Endothelial cell of umbilical vein (primary cell): ENCODE measurements at regions of chr17 and their contacts with region 1.

Region 1: DNA sequence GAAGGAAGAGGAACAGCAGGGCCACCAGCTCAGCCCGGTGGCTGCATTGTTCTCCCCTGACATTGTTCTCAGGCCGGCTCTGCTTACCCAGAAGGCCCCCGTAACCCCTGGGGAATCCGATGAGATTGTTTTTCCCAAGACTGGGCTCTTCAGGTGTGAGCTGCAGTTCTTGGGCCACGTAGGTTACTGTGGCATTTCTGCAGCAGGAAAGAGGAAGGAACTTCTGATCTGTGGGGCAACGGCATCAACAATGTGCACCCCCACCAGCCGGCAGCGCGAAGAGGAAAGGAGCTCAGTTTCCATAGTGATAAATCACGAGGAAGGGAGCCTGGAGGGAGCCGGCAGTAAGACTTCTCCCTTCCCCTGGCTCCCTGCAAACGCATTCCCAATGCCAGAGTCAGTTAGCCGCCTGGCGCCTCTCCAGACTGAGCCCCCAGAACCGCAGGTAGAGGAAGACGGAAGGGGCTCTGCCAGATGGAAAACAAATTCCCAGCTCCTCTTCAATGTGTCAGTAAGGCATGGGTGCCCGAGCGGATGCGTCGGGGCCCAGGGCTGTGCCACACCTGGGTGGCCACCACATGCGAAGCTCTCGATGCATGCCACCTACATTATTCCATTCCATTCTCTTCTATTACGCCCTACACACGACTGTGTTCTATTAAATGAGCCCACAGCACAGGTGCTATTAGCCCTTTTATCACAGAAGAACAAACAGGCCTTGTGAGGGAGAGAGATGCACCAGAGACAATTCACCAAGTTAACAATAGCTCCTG is 21.5 kb upstream of the PECAM1 start:
- DNase-seq: peak; percentile 99
- H3K4me3 ChIP-seq: no peak overlapping the region
- H3K27ac ChIP-seq: peak overlapping the region; percentile 86
- H3K4me1 ChIP-seq: peaks cover 45% of the 10 kb centered on the region
- H3K27me3 ChIP-seq: no peaks in the 10 kb centered on the region
- CTCF ChIP-seq: no peak
- POLR2A ChIP-seq: peak; percentile 52

Region 2: GRCh38 chr17:64020056-64020766 is 392.0 kb before region 1 on chr17 and contains the start of gene ICAM2:
- CTCF ChIA-PET with region 1: no interaction called
- POLR2A ChIA-PET with region 1: no interaction called
- dilution Hi-C with region 1: no loop called
- intact Hi-C with region 1: loop called (anchors 5 kb)
- DNase-seq: peak; percentile 71
- H3K4me3 ChIP-seq: peak within 1 kb of the TSS; percentile 49 to 63 (median 54)
- H3K27ac ChIP-seq: peak within 1 kb of the TSS; percentile 94
- H3K4me1 ChIP-seq: peaks cover 67% of the 10 kb centered on the region
- H3K27me3 ChIP-seq: no peaks in the 10 kb centered on the region
- CTCF ChIP-seq: no peak
- POLR2A ChIP-seq: peak; percentile 48
- total RNA-seq, gene ICAM2: 514 and 586 TPM in 2 replicates

Region 3: GRCh38 chr17:64326395-64327054 is 85.7 kb before region 1 on chr17:
- CTCF ChIA-PET with region 1: interaction called, 10 read pairs
- POLR2A ChIA-PET with region 1: interaction called, 4 read pairs
- dilution Hi-C with region 1: no loop called
- intact Hi-C with region 1: loop called (anchors 1 kb)
- DNase-seq: peak; percentile 77
- H3K4me3 ChIP-seq: no peak overlapping the region
- H3K27ac ChIP-seq: peak overlapping the region; percentile 95
- H3K4me1 ChIP-seq: peaks cover 57% of the 10 kb centered on the region
- H3K27me3 ChIP-seq: no peaks in the 10 kb centered on the region
- CTCF ChIP-seq: no peak
- POLR2A ChIP-seq: peak; percentile 45

Region 4: DNA sequence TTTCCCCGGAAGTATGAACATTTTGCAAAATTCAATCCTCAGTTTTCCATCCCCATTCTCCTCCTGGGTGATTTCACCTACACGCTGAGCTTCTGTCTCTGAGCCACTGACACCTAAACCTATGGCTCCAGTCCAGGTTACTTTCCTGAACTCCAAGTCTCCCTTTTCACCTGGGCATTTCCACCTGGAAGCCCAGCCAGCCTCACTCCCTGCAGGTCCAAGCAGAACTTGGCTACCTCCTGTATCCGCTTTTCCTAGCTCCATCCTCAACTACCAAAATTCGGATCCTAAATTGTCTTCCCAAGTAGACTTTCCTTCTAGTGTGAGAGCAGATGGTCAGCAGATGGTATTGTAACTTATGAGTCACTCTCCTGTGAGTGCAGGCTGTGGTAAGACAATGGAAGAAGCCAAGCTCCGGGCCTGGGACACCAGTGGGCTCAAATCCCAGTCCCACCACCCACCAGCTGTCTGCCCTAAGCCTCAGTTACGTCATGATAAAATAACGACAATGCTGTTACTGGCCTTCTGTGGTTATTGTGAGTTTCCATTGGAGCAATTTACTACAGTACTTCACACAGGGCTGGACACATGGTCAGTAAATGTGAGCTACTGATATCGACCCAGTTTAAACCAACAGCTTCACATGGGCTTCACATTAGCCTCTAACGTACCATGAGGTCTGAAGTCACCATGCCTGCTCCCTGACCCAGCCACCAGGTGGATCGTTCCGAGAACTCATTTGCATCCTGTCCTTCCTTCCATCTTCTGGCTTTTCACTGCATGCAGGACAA is 54.8 kb before region 1 on chr17:
- CTCF ChIA-PET with region 1: interaction called, 7 read pairs
- POLR2A ChIA-PET with region 1: no interaction called
- dilution Hi-C with region 1: no loop called
- intact Hi-C with region 1: loop called (anchors 2 kb)
- DNase-seq: peak; percentile 91
- H3K4me3 ChIP-seq: no peak overlapping the region
- H3K27ac ChIP-seq: peak overlapping the region; percentile 38
- H3K4me1 ChIP-seq: peaks cover 60% of the 10 kb centered on the region
- H3K27me3 ChIP-seq: no peaks in the 10 kb centered on the region
- CTCF ChIP-seq: no peak
- POLR2A ChIP-seq: peak; percentile 45

Region 5: GRCh38 chr17:64385187-64386083 is 26.8 kb before region 1 on chr17:
- CTCF ChIA-PET with region 1: interaction called, 60 read pairs
- POLR2A ChIA-PET with region 1: interaction called, 17 read pairs
- dilution Hi-C with region 1: no loop called
- intact Hi-C with region 1: loop called (anchors 1 kb)
- DNase-seq: peak; percentile 96
- H3K4me3 ChIP-seq: peak overlapping the region in 2 of 3 experiments; percentile 10 to 27
- H3K27ac ChIP-seq: peak overlapping the region; percentile 98
- H3K4me1 ChIP-seq: peaks cover 73% of the 10 kb centered on the region
- H3K27me3 ChIP-seq: no peaks in the 10 kb centered on the region
- CTCF ChIP-seq: no peak
- POLR2A ChIP-seq: peak; percentile 41

Region 6: DNA sequence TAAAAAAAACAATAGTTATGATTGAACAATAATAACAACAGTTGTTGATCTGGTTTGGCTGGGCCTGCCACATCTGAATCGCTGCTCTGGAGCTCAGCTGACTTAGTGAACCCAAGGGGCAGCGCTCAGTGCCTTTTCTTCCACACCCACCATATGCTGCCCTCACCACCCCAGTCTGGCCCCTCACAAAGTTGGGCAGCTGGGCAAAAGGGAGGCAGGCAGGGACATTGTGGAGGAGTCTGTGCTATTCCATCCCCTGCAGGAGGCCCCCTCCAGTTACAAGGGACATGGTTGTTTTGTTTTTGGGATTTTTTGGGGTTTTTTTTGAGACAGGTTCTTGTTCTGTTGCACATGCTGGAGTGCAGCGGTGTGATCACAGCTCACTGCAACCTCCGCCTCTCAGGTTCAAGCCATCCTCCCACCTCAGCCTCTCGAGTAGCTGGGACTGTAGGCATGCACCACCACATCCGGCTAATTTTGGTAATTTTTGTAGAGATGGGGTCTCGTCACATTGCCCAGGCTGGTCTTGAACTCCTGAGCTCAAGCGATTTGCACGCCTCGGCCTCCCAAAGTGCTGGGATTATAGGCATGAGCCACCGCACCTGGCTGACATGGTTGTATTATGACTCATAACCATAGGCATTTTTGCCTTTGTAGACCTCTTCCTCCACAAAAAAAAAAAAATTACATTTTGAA is 13.0 kb before region 1 on chr17:
- CTCF ChIA-PET with region 1: interaction called, 5 read pairs
- POLR2A ChIA-PET with region 1: no interaction called
- dilution Hi-C with region 1: no loop called
- intact Hi-C with region 1: loop called (anchors 1 kb)
- DNase-seq: peak; percentile 43
- H3K4me3 ChIP-seq: no peak overlapping the region
- H3K27ac ChIP-seq: peak overlapping the region; percentile 81
- H3K4me1 ChIP-seq: peaks cover 32% of the 10 kb centered on the region
- H3K27me3 ChIP-seq: no peaks in the 10 kb centered on the region
- CTCF ChIP-seq: no peak
- POLR2A ChIP-seq: no peak